ENCODE measurements at regions of chr12 and their contacts with region 1.

Region 1: GRCh38 chr12:47742253-47742825 is 16.3 kb downstream of the RAPGEF3 start:
- DNase-seq: peak; percentile 71
- ATAC-seq: peak; percentile 20
- H3K4me3 Mint-ChIP-seq: no peak overlapping the region
- H3K27ac Mint-ChIP-seq: peak overlapping the region; percentile 1
- H3K4me1 Mint-ChIP-seq: peaks cover 73% of the 10 kb centered on the region
- H3K27me3 Mint-ChIP-seq: no peaks in the 10 kb centered on the region
- CTCF ChIP-seq: no peak

Region 2: DNA sequence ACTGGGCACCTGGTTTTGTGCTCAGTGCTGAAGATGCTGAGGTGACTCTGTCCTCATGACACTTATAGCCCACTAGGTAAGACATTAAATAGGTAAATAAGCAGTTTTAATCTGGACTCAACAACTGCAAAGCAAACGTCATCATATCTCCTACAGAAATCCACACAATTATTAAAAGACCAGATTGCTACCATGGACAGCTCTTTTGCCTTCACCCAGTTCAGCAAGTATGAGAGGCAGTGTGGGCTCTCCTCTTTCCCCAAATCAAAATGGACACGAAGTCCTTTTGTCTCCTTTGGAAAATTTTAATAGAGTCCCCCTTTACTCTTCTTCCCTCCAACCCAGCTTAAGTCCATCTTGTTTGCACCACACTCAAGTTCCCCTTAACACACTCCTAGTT is 207.6 kb before region 1 on chr12:
- CTCF ChIA-PET with region 1: no interaction called
- POLR2A ChIA-PET with region 1: no interaction called
- intact Hi-C with region 1: no loop called
- DNase-seq: no peak
- ATAC-seq: no peak
- H3K4me3 Mint-ChIP-seq: no peak overlapping the region
- H3K27ac Mint-ChIP-seq: no peak overlapping the region
- H3K4me1 Mint-ChIP-seq: no peaks in the 10 kb centered on the region
- H3K27me3 Mint-ChIP-seq: peaks cover 34% of the 10 kb centered on the region
- CTCF ChIP-seq: no peak

Region 3: GRCh38 chr12:47725893-47726292 is 16.4 kb before region 1 on chr12:
- CTCF ChIA-PET with region 1: interaction called, 91 read pairs
- POLR2A ChIA-PET with region 1: interaction called, 36 read pairs
- intact Hi-C with region 1: loop called (anchors 1 kb)
- DNase-seq: no peak
- ATAC-seq: peak; percentile 92
- H3K4me3 Mint-ChIP-seq: no peak overlapping the region
- H3K27ac Mint-ChIP-seq: peak overlapping the region; percentile 65
- H3K4me1 Mint-ChIP-seq: peaks cover 37% of the 10 kb centered on the region
- H3K27me3 Mint-ChIP-seq: no peaks in the 10 kb centered on the region
- CTCF ChIP-seq: no peak

Region 4: DNA sequence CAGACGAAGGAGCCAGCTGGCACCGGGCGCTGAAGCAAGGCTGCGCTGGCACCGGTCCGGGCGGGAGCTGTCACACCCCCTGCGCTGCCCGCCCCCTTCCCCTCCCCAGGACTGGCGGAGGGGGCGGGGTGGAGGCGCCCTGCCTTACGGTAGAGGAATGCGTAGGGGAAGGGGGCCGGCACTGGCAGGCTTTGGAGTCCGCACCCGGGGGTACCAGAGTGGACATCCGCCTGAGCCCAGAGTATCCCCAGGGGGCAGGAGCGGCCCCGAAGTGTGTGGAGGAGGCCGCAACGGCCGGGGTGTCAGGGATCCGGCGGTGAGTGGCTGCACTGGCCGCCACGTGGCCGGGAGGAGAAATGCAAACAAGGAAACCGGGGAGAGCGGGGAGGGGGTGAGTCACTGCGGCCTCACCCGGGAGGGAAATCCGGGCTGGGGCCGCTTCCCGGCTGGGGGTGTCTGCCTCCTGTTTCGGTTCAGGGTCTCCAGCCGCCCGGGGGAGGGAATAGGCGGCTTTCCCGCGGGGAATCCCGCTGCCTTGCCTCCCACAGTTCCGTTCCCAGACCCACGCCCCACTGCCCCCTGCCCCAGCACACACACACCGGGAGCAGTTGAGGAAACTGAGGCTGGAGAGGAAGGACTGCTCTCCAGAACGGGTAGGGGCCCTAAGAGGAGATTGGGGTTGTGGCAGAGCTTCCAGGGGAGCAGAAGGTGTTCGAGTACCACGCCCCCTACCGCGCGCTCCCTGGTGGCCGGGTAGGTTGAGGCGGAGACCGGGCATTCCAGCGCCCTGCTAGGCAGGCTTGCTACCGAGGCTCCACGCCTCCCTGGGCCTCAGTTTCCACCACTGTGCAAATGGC is 16.7 kb after region 1 on chr12 and contains the start of gene RAPGEF3:
- CTCF ChIA-PET with region 1: interaction called, 298 read pairs
- POLR2A ChIA-PET with region 1: interaction called, 84 read pairs
- intact Hi-C with region 1: loop called (anchors 1 kb)
- DNase-seq: peak; percentile 64
- ATAC-seq: peak; percentile 73
- H3K4me3 Mint-ChIP-seq: peak within 1 kb of the TSS; percentile 81
- H3K27ac Mint-ChIP-seq: no peak within 1 kb of the TSS
- H3K4me1 Mint-ChIP-seq: peaks cover 60% of the 10 kb centered on the region
- H3K27me3 Mint-ChIP-seq: no peaks in the 10 kb centered on the region
- CTCF ChIP-seq: no peak
- total RNA-seq, gene RAPGEF3: 2.7 and 5.0 TPM in 2 replicates

Region 5: GRCh38 chr12:47773062-47773857 is 30.9 kb after region 1 on chr12 and contains the start of gene SLC48A1:
- CTCF ChIA-PET with region 1: interaction called, 416 read pairs
- POLR2A ChIA-PET with region 1: interaction called, 48 read pairs
- intact Hi-C with region 1: loop called (anchors 1 kb)
- DNase-seq: peak; percentile 82
- ATAC-seq: peak; percentile 94
- H3K4me3 Mint-ChIP-seq: peak within 1 kb of the TSS; percentile 87
- H3K27ac Mint-ChIP-seq: peak within 1 kb of the TSS; percentile 69
- H3K4me1 Mint-ChIP-seq: peaks cover 18% of the 10 kb centered on the region
- H3K27me3 Mint-ChIP-seq: no peaks in the 10 kb centered on the region
- CTCF ChIP-seq: no peak
- total RNA-seq, gene SLC48A1: 12.7 and 12.8 TPM in 2 replicates

Region 6: GRCh38 chr12:47819896-47820630 is 77.7 kb after region 1 on chr12 and contains the start of gene HDAC7:
- CTCF ChIA-PET with region 1: interaction called, 11 read pairs
- POLR2A ChIA-PET with region 1: interaction called, 4 read pairs
- intact Hi-C with region 1: no loop called
- DNase-seq: peak; percentile 57
- ATAC-seq: peak; percentile 76
- H3K4me3 Mint-ChIP-seq: peak within 1 kb of the TSS; percentile 89
- H3K27ac Mint-ChIP-seq: peak within 1 kb of the TSS; percentile 93
- H3K4me1 Mint-ChIP-seq: peaks cover 65% of the 10 kb centered on the region
- H3K27me3 Mint-ChIP-seq: no peaks in the 10 kb centered on the region
- CTCF ChIP-seq: no peak
- total RNA-seq, gene HDAC7: 103 and 126 TPM in 2 replicates

Region 7: DNA sequence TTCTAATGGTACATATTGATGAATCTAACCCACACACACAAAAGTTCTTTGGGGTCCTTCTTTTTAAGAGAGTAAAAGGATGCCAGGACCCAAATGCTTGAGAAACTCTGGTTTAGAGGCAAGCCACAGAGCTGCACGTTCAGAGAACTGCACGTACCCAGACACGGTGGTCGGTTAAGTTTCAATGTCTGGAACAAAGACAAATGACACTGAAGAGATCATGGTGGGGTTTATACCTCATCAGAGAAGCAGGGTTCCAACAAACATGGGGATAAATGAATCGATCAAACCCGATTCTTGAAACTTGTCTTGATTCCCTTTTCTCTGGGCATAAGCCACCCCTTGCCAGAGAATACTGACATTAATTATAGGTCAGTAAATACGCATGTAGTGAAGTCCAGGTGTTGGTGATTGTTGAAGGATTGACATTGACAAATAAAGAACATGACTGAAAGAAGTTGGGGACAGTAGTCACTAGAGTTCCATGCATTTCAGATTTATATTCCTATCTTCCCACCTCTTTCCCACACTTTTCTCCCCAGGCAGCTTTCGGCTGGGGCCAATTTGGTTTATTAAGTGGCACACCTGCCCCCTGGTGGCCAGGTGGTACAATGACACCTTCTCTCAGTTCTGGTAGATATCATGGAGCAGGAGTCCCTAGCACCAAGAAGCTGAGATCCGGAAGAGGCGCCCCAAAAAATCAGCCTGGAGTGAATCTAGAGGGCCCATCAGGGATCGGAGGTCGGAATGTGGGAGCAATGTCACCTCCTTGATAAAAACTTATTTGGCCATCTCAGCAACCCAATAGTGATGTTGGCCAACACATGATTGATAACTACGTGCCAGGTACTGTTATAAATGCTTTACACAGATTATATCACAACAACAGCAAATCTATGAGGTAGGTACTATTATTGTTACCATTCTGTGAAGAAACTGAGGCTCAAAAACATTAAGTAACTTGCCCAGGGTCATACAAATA is 95.1 kb after region 1 on chr12:
- CTCF ChIA-PET with region 1: interaction called, 128 read pairs
- POLR2A ChIA-PET with region 1: interaction called, 13 read pairs
- intact Hi-C with region 1: loop called (anchors 1 kb)
- DNase-seq: peak; percentile 53
- ATAC-seq: peak; percentile 52
- H3K4me3 Mint-ChIP-seq: peak overlapping the region; percentile 25
- H3K27ac Mint-ChIP-seq: peak overlapping the region; percentile 36
- H3K4me1 Mint-ChIP-seq: peaks cover 58% of the 10 kb centered on the region
- H3K27me3 Mint-ChIP-seq: no peaks in the 10 kb centered on the region
- CTCF ChIP-seq: no peak